ENCODE measurements at regions of chr18 and their contacts with region 1.

Region 1: GRCh38 chr18:21134898-21135297 is 23.3 kb upstream of the ROCK1 start:
- DNase-seq: no peak
- H3K4me3 ChIP-seq: no peak overlapping the region
- H3K27ac ChIP-seq: no peak overlapping the region
- H3K4me1 ChIP-seq: no peaks in the 10 kb centered on the region
- H3K27me3 ChIP-seq: no peaks in the 10 kb centered on the region
- CTCF ChIP-seq: peak; percentile 15 to 52 (median 36)

Region 2: DNA sequence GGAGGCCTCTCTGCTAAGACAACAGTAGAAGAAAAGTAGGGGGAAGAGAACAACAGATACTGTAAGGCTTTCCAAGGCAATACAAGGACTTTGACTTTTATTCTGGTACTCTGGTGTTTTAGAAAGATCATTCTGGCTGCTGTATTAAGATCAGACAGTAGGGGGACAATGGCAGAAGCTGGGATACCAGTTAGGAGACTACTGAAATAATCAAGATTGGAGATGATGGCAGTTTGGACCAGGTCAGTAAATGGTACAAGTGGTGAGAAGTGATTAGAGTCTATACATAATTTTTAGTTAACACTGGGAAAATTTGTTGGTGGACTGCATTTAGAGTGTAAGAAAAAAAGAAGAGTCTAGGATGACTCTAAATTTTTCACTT is 163.0 kb before region 1 on chr18:
- intact Hi-C with region 1: loop called (anchors 5 kb)
- DNase-seq: no peak
- H3K4me3 ChIP-seq: no peak overlapping the region
- H3K27ac ChIP-seq: no peak overlapping the region
- H3K4me1 ChIP-seq: no peaks in the 10 kb centered on the region
- H3K27me3 ChIP-seq: no peaks in the 10 kb centered on the region
- CTCF ChIP-seq: peak; percentile 20 to 33 (median 21)

Region 3: DNA sequence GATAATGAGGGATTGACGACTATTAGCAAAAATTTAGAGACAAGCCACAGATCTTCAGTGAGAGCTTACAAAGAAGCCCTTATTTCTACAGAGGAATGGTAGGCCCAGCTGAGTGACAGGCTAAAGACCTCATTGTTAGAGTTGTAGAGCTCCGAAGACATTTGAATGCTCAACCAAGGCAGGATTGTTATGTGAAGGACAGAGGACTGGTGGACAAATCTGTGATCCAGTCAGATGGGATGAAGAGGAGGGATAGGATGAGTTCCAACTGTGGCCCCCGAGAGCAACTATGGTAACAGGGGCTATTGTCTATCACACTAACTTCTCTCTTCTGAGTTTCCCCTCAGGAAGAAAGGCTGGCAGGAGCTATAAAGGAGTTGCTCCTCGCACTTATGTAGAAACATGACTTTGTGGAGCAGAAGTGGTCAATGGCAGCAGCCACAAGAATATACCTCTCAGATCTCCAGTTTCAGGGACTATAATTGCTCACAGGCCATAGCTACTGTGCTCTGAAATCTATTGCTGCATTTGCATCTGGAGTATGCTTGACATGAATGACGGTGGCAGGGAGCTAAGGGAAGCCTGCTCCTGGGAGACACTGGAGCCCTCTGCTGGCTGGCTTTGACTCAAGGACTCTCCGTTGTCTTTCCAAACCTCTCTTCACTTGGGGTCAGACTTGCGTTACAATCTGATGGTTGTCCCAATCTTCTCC is 56.9 kb after region 1 on chr18:
- intact Hi-C with region 1: no loop called
- DNase-seq: no peak
- H3K4me3 ChIP-seq: no peak overlapping the region
- H3K27ac ChIP-seq: no peak overlapping the region
- H3K4me1 ChIP-seq: no peaks in the 10 kb centered on the region
- H3K27me3 ChIP-seq: no peaks in the 10 kb centered on the region
- CTCF ChIP-seq: peak in 2 of 3 experiments; percentile 22 to 44

Region 4: GRCh38 chr18:21264651-21265050 is 129.8 kb after region 1 on chr18:
- intact Hi-C with region 1: no loop called
- DNase-seq: no peak
- H3K4me3 ChIP-seq: no peak overlapping the region
- H3K27ac ChIP-seq: peak overlapping the region in 1 of 2 donors; percentile 38
- H3K4me1 ChIP-seq: peaks cover 0 to 12% of the 10 kb centered on the region in 2 donors
- H3K27me3 ChIP-seq: no peaks in the 10 kb centered on the region
- CTCF ChIP-seq: no peak

Region 5: GRCh38 chr18:21444465-21445023 is 309.6 kb after region 1 on chr18:
- intact Hi-C with region 1: no loop called
- DNase-seq: no peak
- H3K4me3 ChIP-seq: no peak overlapping the region
- H3K27ac ChIP-seq: no peak overlapping the region
- H3K4me1 ChIP-seq: no peaks in the 10 kb centered on the region
- H3K27me3 ChIP-seq: no peaks in the 10 kb centered on the region
- CTCF ChIP-seq: peak; percentile 37 to 73 (median 56)

Region 6: DNA sequence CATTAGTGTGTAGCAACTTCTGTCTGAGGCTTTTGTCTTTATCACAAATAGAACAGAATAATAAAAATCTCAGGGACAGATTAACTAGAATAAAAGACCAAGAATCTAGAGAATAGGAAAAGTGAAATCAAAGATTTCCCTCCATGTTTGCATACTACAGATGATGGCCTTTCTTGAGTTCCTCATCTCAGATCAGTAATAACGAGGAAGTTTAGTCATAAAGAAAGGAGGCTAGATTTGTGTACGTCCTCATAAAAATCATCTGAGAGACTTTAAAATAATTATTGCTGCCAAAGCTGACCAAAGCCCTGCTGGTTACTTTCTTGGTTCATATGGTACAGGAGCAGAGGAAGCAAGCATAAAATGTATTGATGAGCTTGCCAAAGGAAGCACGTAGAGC is 723.0 kb after region 1 on chr18:
- intact Hi-C with region 1: no loop called
- DNase-seq: no peak
- H3K4me3 ChIP-seq: no peak overlapping the region
- H3K27ac ChIP-seq: no peak overlapping the region
- H3K4me1 ChIP-seq: no peaks in the 10 kb centered on the region
- H3K27me3 ChIP-seq: no peaks in the 10 kb centered on the region
- CTCF ChIP-seq: no peak